Posterior vena cava (tissue), 2 donors: ENCODE measurements at regions of chr12 and their contacts with region 1.

Region 1: DNA sequence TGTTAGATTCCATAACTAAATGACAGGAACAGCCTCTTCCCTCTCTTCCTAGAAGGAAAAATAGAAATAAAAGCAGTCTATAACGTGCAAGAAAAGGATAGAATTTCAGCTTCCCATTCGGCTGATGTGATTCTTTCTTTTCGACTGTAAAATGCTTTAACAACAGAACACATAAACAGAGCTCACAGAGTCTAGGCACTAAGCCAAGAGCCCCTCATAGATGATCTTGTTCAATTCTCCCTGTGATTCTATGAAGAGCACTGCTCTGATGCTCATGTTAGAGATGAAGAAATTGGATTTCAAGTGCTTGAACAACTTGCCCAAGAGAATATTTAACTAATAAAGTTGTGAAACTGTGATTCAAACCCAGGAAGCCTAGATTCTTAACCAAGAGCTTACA is 232.7 kb downstream of the RPAP3 start:
- DNase-seq: no peak

Region 2: DNA sequence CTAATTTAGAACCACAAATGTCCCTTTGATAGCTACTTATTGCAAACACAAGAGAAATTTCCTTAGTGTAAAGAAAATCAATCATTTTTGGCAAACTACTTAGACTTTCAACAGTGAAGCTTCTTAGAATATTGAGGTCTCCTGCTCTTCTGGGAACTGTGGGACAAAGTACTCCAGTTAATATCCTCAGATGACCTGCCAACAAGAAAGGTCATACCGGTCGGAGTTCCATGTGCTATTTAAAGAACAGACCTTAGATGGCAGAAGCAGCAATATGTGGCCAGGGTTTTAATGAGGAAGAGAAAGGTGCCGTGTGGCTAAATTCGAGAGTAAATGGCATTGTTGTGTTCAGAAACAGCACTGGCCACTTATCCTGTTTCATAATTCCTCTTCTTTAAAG is 278.6 kb before region 1 on chr12:
- intact Hi-C with region 1: loop called in 1 of 2 experiments (anchors 2 kb)
- DNase-seq: no peak

Region 3: DNA sequence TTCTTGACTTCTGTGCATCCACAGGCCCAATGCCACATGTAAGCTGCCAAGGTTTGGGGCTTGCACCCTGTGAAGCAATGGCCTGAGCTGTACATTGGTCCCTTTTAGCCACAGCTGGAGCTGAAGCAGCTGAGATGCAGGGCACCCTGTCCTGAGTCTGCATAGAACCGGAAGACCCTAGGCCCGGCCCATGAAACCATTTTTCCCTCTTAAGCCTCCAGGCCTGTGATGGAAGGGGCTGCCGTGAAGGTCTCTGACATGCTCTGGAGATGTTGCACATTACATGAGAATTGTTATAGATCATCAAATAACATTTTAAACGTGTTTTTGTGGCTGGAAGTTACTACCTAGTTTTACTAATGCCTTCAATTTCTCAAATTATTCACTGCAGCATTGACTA is 44.0 kb after region 1 on chr12:
- intact Hi-C with region 1: no loop called
- DNase-seq: no peak